A549 (cell line): ENCODE measurements at regions of chr3 and their contacts with region 1.

Region 1: GRCh38 chr3:58177747-58178527 is 32.8 kb downstream of the DNASE1L3 start:
- DNase-seq: peak; percentile 69 to 80
- ATAC-seq: peak; percentile 27 to 70
- H3K4me3 ChIP-seq: no peak overlapping the region
- H3K27ac ChIP-seq: peak overlapping the region; percentile 48 to 98
- H3K4me1 ChIP-seq: peaks cover 75% of the 10 kb centered on the region
- CTCF ChIP-seq: peak; percentile 75
- EP300 ChIP-seq: no peak
- POLR2A ChIP-seq: no peak
- RAD21 ChIP-seq: peak; percentile 57 to 62

Region 2: GRCh38 chr3:58135712-58136543 is 42.0 kb before region 1 on chr3:
- CTCF ChIA-PET with region 1: interaction called, 10 read pairs
- POLR2A ChIA-PET with region 1: no interaction called
- DNase-seq: no peak
- ATAC-seq: peak in 1 of 2 experiments; percentile 12; a peak in 2 of 6 replicates
- H3K4me3 ChIP-seq: no peak overlapping the region
- H3K27ac ChIP-seq: no peak overlapping the region; a peak in 1 of 6 replicates
- H3K4me1 ChIP-seq: peaks cover 15% of the 10 kb centered on the region; the same call in 2 of the 3 replicates
- CTCF ChIP-seq: peak; percentile 26; the same call in 2 of the 3 replicates
- EP300 ChIP-seq: no peak
- POLR2A ChIP-seq: no peak
- RAD21 ChIP-seq: no peak

Region 3: DNA sequence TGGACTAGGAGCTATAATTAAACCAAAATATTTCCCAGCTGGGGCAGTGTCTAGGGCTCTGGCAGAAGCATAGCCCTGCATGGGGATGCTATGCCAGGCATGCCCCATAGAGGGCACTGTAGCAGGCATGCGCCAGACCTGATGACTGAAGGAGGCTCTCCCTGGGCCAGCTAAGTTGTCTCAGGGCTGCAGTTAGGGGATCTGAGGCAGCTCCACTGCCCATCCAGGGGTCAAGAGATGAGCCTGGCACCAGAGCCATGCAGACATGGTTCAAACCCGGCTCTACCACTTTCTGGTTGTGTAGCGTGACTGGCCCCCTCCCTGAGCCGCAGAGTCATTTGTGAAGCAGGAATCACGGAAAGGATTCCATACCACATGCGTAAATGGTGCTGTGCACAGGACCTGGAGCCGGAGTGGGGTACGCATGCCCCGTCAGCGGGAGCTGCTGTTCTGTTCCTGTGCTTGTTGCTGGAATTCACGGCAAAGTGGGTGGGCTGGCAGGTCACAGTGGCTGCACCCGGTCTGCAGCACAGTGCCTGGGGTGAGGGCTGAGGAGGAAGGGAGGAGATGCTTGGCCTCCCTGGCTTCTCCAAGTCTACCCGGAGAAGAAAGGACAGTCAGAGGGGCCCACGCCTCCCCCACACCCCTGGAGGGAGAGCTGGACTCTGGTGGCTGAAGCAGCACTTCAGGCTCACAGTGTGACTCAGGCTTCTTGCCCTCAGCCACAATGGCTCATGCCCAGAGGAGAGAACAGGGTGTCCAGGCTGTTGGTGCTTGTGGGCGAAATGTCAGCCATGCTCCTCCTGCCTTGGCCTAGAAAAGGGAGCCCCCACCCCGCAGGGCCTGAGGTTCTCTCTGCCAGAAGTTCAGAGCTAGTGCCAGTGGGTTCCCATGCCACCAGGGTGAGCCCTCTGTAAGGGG is 10.2 kb before region 1 on chr3:
- CTCF ChIA-PET with region 1: interaction called, 49 read pairs
- POLR2A ChIA-PET with region 1: no interaction called
- DNase-seq: peak; percentile 46 to 56
- ATAC-seq: peak; percentile 21 to 54; a peak in 3 of 6 replicates
- H3K4me3 ChIP-seq: no peak overlapping the region
- H3K27ac ChIP-seq: peak overlapping the region; percentile 98
- H3K4me1 ChIP-seq: peaks cover 93% of the 10 kb centered on the region
- CTCF ChIP-seq: peak; percentile 57
- EP300 ChIP-seq: no peak
- POLR2A ChIP-seq: no peak
- RAD21 ChIP-seq: peak in 1 of 2 experiments; percentile 9; a peak in 1 of 5 replicates

Region 4: DNA sequence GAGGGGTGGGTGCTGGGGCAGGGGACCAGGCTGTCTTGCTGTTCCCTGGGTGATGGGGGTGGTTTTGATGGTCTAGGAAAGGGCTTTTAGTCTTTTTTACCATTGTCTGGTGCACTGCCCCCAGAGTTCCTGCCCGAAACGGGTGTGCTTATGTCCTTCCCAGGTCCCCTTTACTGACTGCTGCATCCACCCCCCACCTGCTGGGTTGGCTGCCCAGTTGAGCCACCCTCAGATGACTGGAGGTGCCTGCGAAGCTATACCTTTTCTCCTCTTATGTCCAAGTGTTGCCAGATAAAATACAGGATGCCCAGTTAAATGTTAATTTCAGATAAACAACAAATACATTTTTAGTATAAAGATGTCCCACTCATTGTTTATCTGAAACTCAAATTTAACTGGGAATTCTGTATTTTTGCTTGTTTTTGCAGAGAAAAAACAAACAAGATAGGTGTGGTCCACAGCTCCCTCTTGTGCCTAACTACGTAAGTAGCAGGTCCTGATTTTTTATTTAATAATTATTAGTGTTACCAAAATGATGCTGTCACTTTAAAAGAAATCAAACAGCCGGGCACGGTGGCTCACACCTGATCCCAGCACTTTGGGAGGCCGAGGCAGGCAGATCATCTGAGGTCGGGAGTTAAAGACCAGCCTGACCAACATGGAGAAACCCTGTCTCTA is 122.0 kb after region 1 on chr3:
- CTCF ChIA-PET with region 1: interaction called, 172 read pairs
- POLR2A ChIA-PET with region 1: no interaction called
- DNase-seq: peak in 1 of 2 experiments; percentile 49
- ATAC-seq: peak in 1 of 2 experiments; percentile 61; a peak in 3 of 6 replicates
- H3K4me3 ChIP-seq: no peak overlapping the region
- H3K27ac ChIP-seq: no peak overlapping the region
- H3K4me1 ChIP-seq: peaks cover 12% of the 10 kb centered on the region; the same call in 2 of the 3 replicates
- CTCF ChIP-seq: peak; percentile 71
- EP300 ChIP-seq: no peak
- POLR2A ChIP-seq: no peak
- RAD21 ChIP-seq: peak; percentile 70 to 74